ENCODE measurements at regions of chr1 and their contacts with region 1.

Region 1: DNA sequence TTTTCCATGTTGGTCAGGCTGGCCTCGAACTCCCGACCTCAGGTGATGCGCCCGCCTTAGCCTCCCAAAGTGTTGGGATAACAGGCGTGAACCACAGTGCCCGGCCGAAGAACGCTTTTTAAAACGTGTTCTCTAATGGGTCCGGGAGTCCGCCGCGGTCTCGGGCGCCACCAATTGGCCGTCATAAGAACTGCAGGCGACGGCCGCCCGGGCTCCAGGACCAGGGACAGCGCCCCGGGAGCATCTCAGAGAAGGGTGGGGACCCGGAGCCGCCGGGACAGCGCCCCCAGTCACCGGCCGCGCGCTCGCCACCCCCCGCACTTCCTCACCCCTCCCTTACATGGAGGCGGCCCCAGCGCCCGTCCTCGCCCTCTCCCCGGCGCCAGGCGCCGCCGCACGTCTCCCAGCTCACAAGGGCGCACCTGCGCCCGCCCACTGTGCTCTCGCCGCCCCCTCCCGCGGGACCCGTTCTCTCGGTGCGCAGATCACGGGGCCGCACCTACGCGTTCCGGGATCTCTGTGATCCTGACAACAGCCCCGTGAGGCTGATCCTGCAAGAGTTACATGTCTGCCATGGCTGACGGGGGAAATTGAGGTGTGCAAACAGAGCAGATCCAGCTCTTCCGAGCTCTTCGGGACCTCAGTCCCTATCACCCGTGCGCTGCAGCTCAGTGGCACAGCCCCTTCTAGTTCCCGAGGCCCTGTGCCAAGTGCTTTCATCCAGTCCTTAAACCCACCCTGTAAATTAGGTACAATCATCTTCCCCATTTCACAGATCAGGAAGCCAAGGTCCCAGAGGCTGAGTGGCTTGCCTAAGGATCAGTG is 9.8 kb downstream of the RAP1GAP start:
- DNase-seq: peak; percentile 90 to 100 (median 99)
- ATAC-seq: peak; percentile 96
- H3K4me3 ChIP-seq: peak overlapping the region; percentile 36
- H3K27ac ChIP-seq: no peak overlapping the region
- H3K4me1 ChIP-seq: peaks cover 13 to 31% of the 10 kb centered on the region in 2 experiments; a peak in 4 of 5 replicates
- H3K27me3 ChIP-seq: no peaks in the 10 kb centered on the region
- CTCF ChIP-seq: peak; percentile 89 to 97 (median 97)
- EP300 ChIP-seq: no peak; the same call in 1 of the 2 replicates
- POLR2A ChIP-seq: 0 out of 2 replicates have a peak, but pooled peaks have one; percentile 33
- RAD21 ChIP-seq: peak; percentile 97

Region 2: GRCh38 chr1:21255278-21255942 is 403.9 kb before region 1 on chr1:
- CTCF ChIA-PET with region 1: no interaction called
- POLR2A ChIA-PET with region 1: no interaction called
- in situ Hi-C with region 1: loop called (anchors 10 kb)
- intact Hi-C with region 1: no loop called
- DNase-seq: peak; percentile 76 to 90 (median 80)
- ATAC-seq: peak; percentile 96
- H3K4me3 ChIP-seq: no peak overlapping the region
- H3K27ac ChIP-seq: no peak overlapping the region
- H3K4me1 ChIP-seq: peaks cover 0 to 6% of the 10 kb centered on the region in 2 experiments; a peak in 2 of 5 replicates
- H3K27me3 ChIP-seq: no peaks in the 10 kb centered on the region
- CTCF ChIP-seq: peak; percentile 92 to 98 (median 96)
- EP300 ChIP-seq: no peak
- POLR2A ChIP-seq: no peak
- RAD21 ChIP-seq: peak; percentile 98 to 99

Region 3: GRCh38 chr1:21534674-21535378 is 124.5 kb before region 1 on chr1:
- CTCF ChIA-PET with region 1: interaction called, 3 read pairs
- POLR2A ChIA-PET with region 1: no interaction called
- in situ Hi-C with region 1: no loop called
- intact Hi-C with region 1: loop called (anchors 2 kb)
- DNase-seq: peak; percentile 61 to 72 (median 65)
- ATAC-seq: peak; percentile 92
- H3K4me3 ChIP-seq: no peak overlapping the region
- H3K27ac ChIP-seq: no peak overlapping the region
- H3K4me1 ChIP-seq: peaks cover 0 to 12% of the 10 kb centered on the region in 2 experiments; a peak in 3 of 5 replicates
- H3K27me3 ChIP-seq: peaks cover 35 to 54% of the 10 kb centered on the region in 2 experiments; a peak in 4 of 5 replicates
- CTCF ChIP-seq: peak; percentile 76 to 90 (median 81)
- EP300 ChIP-seq: no peak
- POLR2A ChIP-seq: no peak
- RAD21 ChIP-seq: peak; percentile 52 to 78

Region 4: GRCh38 chr1:21607549-21608529 is 51.5 kb before region 1 on chr1:
- CTCF ChIA-PET with region 1: no interaction called
- POLR2A ChIA-PET with region 1: interaction called, 5 read pairs
- in situ Hi-C with region 1: no loop called
- intact Hi-C with region 1: loop called (anchors 2 kb)
- DNase-seq: peak; percentile 99 to 100 (median 100)
- ATAC-seq: peak; percentile 97
- H3K4me3 ChIP-seq: peak overlapping the region; percentile 26
- H3K27ac ChIP-seq: peak overlapping the region; percentile 80
- H3K4me1 ChIP-seq: peaks cover 43 to 71% of the 10 kb centered on the region in 2 experiments
- H3K27me3 ChIP-seq: no peaks in the 10 kb centered on the region
- CTCF ChIP-seq: no peak
- EP300 ChIP-seq: no peak
- POLR2A ChIP-seq: peak; percentile 82
- RAD21 ChIP-seq: peak in 1 of 2 experiments; percentile 9; a peak in 1 of 4 replicates

Region 5: GRCh38 chr1:21963477-21964217 is 304.3 kb after region 1 on chr1:
- CTCF ChIA-PET with region 1: interaction called, 3 read pairs
- POLR2A ChIA-PET with region 1: interaction called, 3 read pairs
- in situ Hi-C with region 1: no loop called
- intact Hi-C with region 1: loop called (anchors 5 kb)
- DNase-seq: peak; percentile 87 to 93 (median 89)
- ATAC-seq: peak; percentile 97
- H3K4me3 ChIP-seq: no peak overlapping the region
- H3K27ac ChIP-seq: no peak overlapping the region; the same call in 2 of the 3 replicates
- H3K4me1 ChIP-seq: peaks cover 4 to 9% of the 10 kb centered on the region in 2 experiments; a peak in 3 of 5 replicates
- H3K27me3 ChIP-seq: peaks cover 2 to 6% of the 10 kb centered on the region in 2 experiments; a peak in 2 of 5 replicates
- CTCF ChIP-seq: peak; percentile 91 to 97 (median 97)
- EP300 ChIP-seq: peak; percentile 35; the same call in 1 of the 2 replicates
- POLR2A ChIP-seq: no peak
- RAD21 ChIP-seq: peak; percentile 97 to 99

Measured in K562 (cell line).